ENCODE measurements at regions of chr17 and their contacts with region 1.

Region 1: DNA sequence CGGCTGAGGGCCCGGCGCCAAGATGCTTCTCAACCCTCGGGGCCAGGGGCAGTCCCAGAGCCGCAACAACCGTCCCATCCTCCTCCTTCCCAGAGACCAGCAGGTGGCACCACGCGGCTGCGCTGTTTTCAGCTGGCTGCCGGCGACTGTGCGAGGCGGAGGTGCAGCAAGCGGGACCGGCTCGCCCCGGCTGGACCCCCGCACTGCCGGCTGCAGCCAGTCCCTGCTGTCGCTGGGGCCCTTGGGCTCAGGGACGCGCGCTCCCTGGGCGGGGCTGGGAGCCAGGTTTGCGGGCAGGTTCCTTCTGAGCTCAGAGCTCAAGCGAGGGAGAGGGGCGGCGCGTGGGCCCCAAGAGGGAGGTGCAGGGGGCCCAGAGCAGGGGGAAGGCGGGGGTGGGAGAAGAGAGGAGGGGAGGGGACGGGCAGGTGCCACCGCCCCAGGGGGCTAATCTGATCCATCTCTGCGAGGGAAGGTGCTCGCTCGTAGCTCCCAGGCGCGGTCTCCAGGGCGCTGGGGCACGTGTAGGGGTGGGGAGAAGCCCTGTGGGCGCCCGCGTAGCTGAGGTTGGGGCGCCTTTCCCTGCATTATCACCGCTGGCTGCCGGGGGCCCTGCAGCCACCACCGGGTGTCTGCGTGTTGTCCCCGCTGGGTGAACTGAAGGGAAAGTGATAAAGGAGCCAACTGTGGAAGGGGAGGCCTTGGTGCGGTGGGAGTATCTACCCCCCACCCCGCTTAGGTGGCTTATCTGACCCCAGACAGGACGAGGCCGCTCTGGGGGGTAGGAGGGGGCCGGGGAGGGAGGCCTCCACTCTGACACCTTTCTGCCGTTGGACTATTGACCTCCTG is 24.2 kb downstream of the STAT5A start:
- DNase-seq: peak; percentile 80
- ATAC-seq: peak; percentile 83
- H3K4me3 ChIP-seq: peak overlapping the region; percentile 47 to 65 (median 51)
- H3K27ac ChIP-seq: peak overlapping the region; percentile 73
- H3K4me1 ChIP-seq: peaks cover 90% of the 10 kb centered on the region
- H3K27me3 ChIP-seq: no peaks in the 10 kb centered on the region
- CTCF ChIP-seq: peak; percentile 96
- EP300 ChIP-seq: peak in 1 of 2 experiments; percentile 13; a peak in 1 of 4 replicates
- POLR2A ChIP-seq: peak in 1 of 2 experiments; percentile 56; a peak in 1 of 4 replicates
- RAD21 ChIP-seq: peak; percentile 92

Region 2: DNA sequence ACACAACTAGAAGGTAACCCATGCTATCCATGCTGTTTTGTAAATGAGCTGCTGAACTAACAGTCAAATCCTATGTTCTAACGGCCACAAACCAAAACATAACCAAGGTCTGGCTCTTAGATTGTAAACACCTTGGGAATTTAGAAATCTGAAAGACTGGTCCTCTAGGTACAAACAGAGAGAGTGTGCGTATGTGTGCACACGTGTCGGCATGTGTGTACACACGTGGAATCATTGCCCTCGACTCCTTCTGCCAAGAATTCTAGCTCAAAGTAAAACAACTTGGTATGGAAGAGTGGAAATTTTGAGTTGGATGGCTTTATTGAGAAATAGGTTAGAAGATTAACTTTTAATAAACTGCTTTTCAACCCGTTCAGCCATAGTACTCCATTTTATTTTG is 100.1 kb before region 1 on chr17:
- CTCF ChIA-PET with region 1: no interaction called
- POLR2A ChIA-PET with region 1: no interaction called
- in situ Hi-C with region 1: no loop called
- intact Hi-C with region 1: no loop called
- DNase-seq: no peak
- ATAC-seq: no peak
- H3K4me3 ChIP-seq: no peak overlapping the region
- H3K27ac ChIP-seq: no peak overlapping the region
- H3K4me1 ChIP-seq: no peaks in the 10 kb centered on the region
- H3K27me3 ChIP-seq: no peaks in the 10 kb centered on the region
- CTCF ChIP-seq: no peak
- EP300 ChIP-seq: no peak
- POLR2A ChIP-seq: no peak
- RAD21 ChIP-seq: no peak

Region 3: GRCh38 chr17:42276359-42276608 is 36.2 kb before region 1 on chr17 and contains the start of gene STAT5B:
- CTCF ChIA-PET with region 1: no interaction called
- POLR2A ChIA-PET with region 1: interaction called, 21 read pairs
- in situ Hi-C with region 1: no loop called
- intact Hi-C with region 1: no loop called
- DNase-seq: no peak
- ATAC-seq: peak; percentile 20; the same call in 2 of the 3 replicates
- H3K4me3 ChIP-seq: peak within 1 kb of the TSS; percentile 81 to 96 (median 91)
- H3K27ac ChIP-seq: peak within 1 kb of the TSS; percentile 94
- H3K4me1 ChIP-seq: peaks cover 63% of the 10 kb centered on the region
- H3K27me3 ChIP-seq: peaks cover 0 to 9% of the 10 kb centered on the region in 2 experiments; a peak in 2 of 5 replicates
- CTCF ChIP-seq: no peak
- EP300 ChIP-seq: no peak
- POLR2A ChIP-seq: peak in 1 of 2 experiments; percentile 67; a peak in 1 of 4 replicates
- RAD21 ChIP-seq: no peak
- total RNA-seq, gene STAT5B: 17.2 and 21.0 TPM in 2 replicates

Region 4: DNA sequence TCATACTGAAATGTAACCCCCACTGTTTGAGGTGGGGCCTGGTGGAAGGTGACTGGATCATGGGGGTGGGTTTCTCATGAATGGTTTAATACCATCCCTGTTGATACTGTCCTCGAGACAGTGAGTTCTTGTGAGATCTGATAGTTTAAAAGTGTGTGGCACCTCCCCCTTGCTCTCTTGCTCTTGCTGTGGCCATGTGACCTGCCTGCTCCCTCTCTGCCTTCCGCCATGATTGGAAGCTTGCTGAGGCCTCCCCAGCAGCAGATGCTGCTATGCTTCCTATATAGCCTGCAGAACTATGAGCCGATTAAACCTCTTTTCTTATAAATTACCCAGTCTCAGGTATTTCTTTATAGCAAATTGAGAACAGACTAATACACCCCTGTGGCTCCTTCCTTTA is 35.1 kb after region 1 on chr17:
- CTCF ChIA-PET with region 1: no interaction called
- POLR2A ChIA-PET with region 1: no interaction called
- in situ Hi-C with region 1: no loop called
- intact Hi-C with region 1: no loop called
- DNase-seq: no peak
- ATAC-seq: no peak
- H3K4me3 ChIP-seq: no peak overlapping the region
- H3K27ac ChIP-seq: no peak overlapping the region
- H3K4me1 ChIP-seq: peaks cover 33% of the 10 kb centered on the region
- H3K27me3 ChIP-seq: no peaks in the 10 kb centered on the region
- CTCF ChIP-seq: no peak
- EP300 ChIP-seq: no peak
- POLR2A ChIP-seq: no peak
- RAD21 ChIP-seq: no peak

Region 5: DNA sequence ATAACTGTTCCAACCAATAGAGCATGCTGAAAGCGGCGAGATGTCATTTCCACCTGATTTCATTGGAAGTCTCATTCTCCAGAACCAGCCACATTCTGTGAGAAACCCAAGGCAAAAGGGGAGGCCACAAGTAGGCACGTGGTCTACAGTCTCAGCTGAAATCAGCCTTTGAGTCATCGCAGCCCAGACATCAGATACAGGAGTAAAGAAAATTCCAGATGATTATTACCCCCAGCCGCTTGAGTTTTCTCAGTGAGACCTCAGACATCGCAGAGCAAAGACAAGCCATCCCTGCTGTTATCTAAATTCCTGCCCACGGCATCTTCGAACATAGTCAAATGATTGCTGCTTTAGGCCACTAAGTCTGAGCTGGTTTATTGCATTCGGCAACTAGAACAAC is 52.6 kb after region 1 on chr17:
- CTCF ChIA-PET with region 1: no interaction called
- POLR2A ChIA-PET with region 1: no interaction called
- in situ Hi-C with region 1: no loop called
- intact Hi-C with region 1: no loop called
- DNase-seq: no peak
- ATAC-seq: no peak
- H3K4me3 ChIP-seq: no peak overlapping the region
- H3K27ac ChIP-seq: no peak overlapping the region
- H3K4me1 ChIP-seq: peaks cover 63% of the 10 kb centered on the region
- H3K27me3 ChIP-seq: no peaks in the 10 kb centered on the region
- CTCF ChIP-seq: no peak
- EP300 ChIP-seq: no peak
- POLR2A ChIP-seq: no peak
- RAD21 ChIP-seq: no peak

Region 6: GRCh38 chr17:42405963-42406495 is 93.5 kb after region 1 on chr17:
- CTCF ChIA-PET with region 1: interaction called, 10 read pairs
- POLR2A ChIA-PET with region 1: interaction called, 5 read pairs
- in situ Hi-C with region 1: no loop called
- intact Hi-C with region 1: no loop called
- DNase-seq: peak; percentile 63
- ATAC-seq: peak; percentile 84
- H3K4me3 ChIP-seq: no peak overlapping the region
- H3K27ac ChIP-seq: no peak overlapping the region
- H3K4me1 ChIP-seq: 0 out of 2 replicates have a peak, but pooled peaks cover 8% of the 10 kb centered on the region
- H3K27me3 ChIP-seq: no peaks in the 10 kb centered on the region
- CTCF ChIP-seq: peak; percentile 98
- EP300 ChIP-seq: no peak
- POLR2A ChIP-seq: no peak
- RAD21 ChIP-seq: peak; percentile 98

Measured in HepG2 (cell line).